Prostate gland (tissue), 2 donors: ENCODE measurements at regions of chr17 and their contacts with region 1.

Region 1: GRCh38 chr17:62627219-62627910 is at the start of gene MRC2:
- DNase-seq: peak; percentile 30
- H3K4me3 ChIP-seq: peak within 1 kb of the TSS; percentile 52 to 56
- H3K27ac ChIP-seq: peak within 1 kb of the TSS; percentile 78 to 80
- H3K4me1 ChIP-seq: no peaks in the 10 kb centered on the region
- H3K27me3 ChIP-seq: no peaks in the 10 kb centered on the region
- CTCF ChIP-seq: peak in 1 of 4 experiments; percentile 11
- POLR2A ChIP-seq: peak; percentile 40
- total RNA-seq, gene MRC2: 34.2 to 73.7 TPM

Region 2: GRCh38 chr17:62653002-62653825 is 25.8 kb after region 1 on chr17:
- intact Hi-C with region 1: loop called (anchors 2 kb)
- DNase-seq: no peak
- H3K4me3 ChIP-seq: peak overlapping the region; percentile 34 to 39
- H3K27ac ChIP-seq: peak overlapping the region; percentile 72 to 76
- H3K4me1 ChIP-seq: peaks cover 5% of the 10 kb centered on the region
- H3K27me3 ChIP-seq: no peaks in the 10 kb centered on the region
- CTCF ChIP-seq: no peak
- POLR2A ChIP-seq: no peak